A549 (cell line): ENCODE measurements at regions of chr1 and their contacts with region 1.

Region 1: DNA sequence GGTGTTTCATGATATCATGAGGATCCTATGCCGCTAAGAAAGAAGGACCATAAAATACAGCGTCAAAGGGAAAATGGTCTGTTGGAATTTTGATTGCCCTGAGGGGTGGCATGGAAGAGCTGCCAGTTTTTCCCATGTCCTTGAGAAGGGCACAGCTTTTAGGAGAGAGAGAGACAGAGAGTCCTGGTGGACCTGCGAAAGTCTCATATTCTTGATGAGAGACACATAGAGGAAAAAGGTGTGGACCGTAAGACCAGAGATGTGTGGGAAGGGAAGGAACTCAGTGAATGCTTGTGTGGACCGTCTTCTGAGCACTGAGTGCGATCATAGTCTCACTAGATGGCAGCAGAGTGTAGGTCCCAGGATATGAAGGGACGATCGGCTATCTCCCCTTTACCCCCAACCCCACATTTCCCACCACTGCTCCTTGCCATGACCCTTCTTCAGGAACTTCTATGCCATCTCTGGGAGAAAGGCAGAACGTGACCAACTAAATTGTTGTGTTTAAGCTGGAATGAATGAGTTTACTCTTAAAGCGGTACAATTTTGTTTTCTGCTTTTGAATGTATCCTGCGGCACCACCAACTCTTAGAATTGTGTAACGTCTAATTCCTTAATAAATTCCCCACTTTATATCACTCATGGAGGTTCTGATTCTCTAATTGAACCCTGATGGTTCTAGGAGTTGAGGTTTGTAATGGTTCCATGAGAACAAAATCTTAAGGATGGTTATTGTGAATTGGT is 117.7 kb downstream of the CTH start:
- DNase-seq: peak; percentile 4 to 20
- ATAC-seq: peak; percentile 93 to 96
- H3K4me3 ChIP-seq: no peak overlapping the region
- H3K27ac ChIP-seq: no peak overlapping the region
- H3K4me1 ChIP-seq: no peaks in the 10 kb centered on the region
- CTCF ChIP-seq: peak; percentile 53
- EP300 ChIP-seq: no peak
- POLR2A ChIP-seq: no peak
- RAD21 ChIP-seq: peak; percentile 45 to 55; a peak in 3 of 5 replicates

Region 2: DNA sequence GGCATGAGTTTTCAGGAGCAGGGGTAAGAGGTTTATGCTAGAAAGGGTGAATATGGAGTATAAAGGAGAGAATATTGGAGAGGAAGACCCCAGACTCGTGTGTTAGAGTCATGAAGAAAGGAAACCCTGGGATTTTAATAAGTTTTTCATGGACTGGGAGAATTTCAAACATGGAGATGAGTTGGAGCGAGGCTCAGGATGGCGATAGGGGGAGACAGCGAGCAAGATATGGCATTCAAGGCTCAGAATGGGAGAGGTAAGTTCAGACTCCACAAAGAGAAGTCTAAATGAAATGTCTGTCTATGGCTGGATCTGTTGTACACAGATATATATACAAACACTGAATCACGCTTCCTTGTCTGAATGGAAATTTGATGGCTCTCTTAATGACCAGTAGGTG is 415.9 kb before region 1 on chr1:
- CTCF ChIA-PET with region 1: no interaction called
- POLR2A ChIA-PET with region 1: no interaction called
- DNase-seq: peak in 1 of 2 experiments; percentile 2
- ATAC-seq: peak in 1 of 2 experiments; percentile 45; a peak in 1 of 6 replicates
- H3K4me3 ChIP-seq: no peak overlapping the region
- H3K27ac ChIP-seq: no peak overlapping the region
- H3K4me1 ChIP-seq: no peaks in the 10 kb centered on the region
- CTCF ChIP-seq: no peak; the same call in 2 of the 3 replicates
- EP300 ChIP-seq: no peak
- POLR2A ChIP-seq: no peak
- RAD21 ChIP-seq: no peak

Region 3: DNA sequence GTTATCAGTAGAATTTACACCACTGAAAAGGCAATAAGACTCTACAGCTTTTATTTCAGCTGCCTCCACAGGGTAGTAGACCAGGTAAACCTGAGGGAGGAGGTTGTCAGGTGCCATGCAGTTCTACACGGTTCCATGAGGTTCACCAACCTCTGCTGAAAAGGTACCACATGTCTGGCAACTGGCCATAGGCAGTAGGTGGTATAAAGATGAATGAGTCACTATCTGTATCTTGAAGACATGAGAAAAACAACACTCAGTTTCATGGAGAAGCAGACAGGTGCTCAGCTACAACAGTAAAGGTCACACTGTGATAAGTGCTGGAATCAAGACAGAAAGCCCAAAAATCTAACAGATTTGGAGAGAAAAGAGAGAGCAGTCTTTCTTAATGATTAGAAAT is 373.4 kb after region 1 on chr1:
- CTCF ChIA-PET with region 1: no interaction called
- POLR2A ChIA-PET with region 1: no interaction called
- DNase-seq: no peak
- ATAC-seq: no peak
- H3K4me3 ChIP-seq: no peak overlapping the region
- H3K27ac ChIP-seq: no peak overlapping the region
- H3K4me1 ChIP-seq: no peaks in the 10 kb centered on the region
- CTCF ChIP-seq: no peak
- EP300 ChIP-seq: no peak
- POLR2A ChIP-seq: no peak
- RAD21 ChIP-seq: no peak

Region 4: GRCh38 chr1:71049951-71050598 is 521.3 kb after region 1 on chr1:
- CTCF ChIA-PET with region 1: interaction called, 13 read pairs
- POLR2A ChIA-PET with region 1: no interaction called
- DNase-seq: peak; percentile 30 to 63
- ATAC-seq: peak; percentile 49 to 70
- H3K4me3 ChIP-seq: no peak overlapping the region
- H3K27ac ChIP-seq: no peak overlapping the region
- H3K4me1 ChIP-seq: no peaks in the 10 kb centered on the region; the same call in 2 of the 3 replicates
- CTCF ChIP-seq: peak; percentile 71
- EP300 ChIP-seq: no peak
- POLR2A ChIP-seq: no peak
- RAD21 ChIP-seq: peak; percentile 72 to 80